Right ventricle myocardium inferior (tissue), 1 donor: ENCODE measurements at regions of chr7 and their contacts with region 1.

Region 1: DNA sequence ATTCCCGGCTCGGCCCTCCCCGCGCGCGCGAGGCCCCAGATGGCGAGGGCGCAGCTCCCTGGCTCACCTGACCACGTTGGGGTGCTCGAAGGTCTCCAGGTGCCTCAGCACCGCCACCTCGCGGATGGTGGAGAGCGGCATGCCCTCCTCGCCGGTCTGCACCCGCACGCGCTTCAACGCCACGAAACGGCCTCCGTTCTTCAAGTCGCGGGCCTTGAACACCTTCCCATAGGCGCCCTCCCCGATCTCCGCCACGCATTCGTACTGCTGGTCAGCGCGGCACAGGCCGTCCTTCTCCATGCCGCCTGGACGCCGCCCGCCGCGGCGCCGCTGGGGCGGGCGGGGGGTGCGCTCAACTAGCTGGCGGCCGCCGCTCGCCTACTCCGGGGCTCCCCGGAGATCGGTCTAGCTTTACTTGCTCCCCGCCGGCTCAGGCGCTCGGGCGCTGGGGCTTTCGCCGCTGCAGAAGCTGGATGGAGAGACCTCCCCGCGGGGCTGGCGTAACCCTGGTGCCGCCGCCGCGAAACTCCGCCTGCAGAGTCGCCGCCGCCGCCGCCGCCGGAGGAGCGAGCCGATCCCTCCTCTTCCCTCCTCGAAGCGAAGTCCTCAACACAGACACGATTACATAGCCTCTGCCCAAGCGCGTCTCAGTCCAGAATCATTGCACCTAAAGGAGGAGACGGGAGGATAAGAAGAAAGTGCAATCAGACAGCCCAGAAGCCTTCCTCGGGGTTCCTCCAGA is 3.2 kb downstream of the CDK6 start:
- DNase-seq: peak; percentile 94
- ATAC-seq: peak; percentile 80

Region 2: DNA sequence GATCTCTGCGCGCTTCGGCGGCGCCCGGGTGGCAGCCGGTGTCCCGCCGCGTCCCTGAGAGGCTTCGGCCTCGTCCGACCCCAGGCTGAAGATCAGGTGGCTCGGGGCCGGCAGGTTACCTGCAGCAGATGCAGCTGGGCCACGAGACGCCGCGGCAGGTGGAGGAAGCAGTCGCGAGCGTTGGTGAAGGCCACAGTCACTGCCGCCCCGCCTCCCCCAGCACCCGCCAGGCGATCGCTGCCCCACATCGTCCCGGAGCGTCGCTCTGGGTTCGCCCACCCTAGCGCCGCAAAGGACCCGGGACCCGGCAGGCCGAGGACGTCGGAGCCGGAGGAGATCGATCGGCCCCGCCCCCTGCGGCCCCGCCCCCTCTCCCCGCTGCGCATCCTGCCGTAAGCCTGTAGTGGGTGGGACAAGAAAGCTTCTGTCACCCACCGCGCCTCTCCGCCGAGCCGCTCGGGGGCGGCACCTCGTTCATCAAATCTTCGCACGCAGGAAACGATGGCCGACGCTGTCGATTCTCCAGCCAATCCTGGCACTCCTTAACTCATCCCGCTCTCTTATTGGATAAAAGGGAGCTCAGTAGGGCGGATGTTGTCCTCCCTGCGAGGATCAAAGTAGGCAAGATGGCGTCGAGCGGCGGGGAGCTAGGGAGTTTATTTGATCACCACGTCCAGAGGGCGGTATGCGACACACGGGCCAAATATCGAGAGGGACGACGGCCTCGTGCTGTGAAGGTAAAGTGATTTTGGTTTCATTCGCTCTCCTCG is 304.8 kb before region 1 on chr7 and contains the starts of genes PEX1 and RBM48:
- intact Hi-C with region 1: loop called (anchors 10 kb)
- DNase-seq: peak; percentile 96
- ATAC-seq: peak; percentile 99
- total RNA-seq, gene PEX1: 10.4 TPM
- total RNA-seq, gene RBM48: 11.8 TPM

Region 3: DNA sequence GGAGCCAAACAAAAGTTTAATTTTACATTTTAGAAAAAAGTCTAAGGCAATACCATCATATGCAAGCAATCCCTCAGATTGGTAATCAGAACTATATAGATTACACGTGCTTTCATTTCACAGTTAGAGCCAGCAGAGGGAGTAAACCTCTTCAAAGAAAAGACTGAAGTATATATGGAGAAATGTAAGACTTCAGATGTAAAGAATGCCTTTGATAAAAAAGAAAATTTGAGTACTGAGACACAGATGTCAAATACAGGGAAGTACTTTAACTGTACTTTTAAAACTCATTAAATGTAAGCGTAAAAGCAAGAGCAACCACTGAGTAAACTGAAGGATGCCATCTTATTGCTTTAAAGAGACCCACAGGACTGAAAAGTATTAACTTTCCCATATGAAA is 141.6 kb before region 1 on chr7:
- intact Hi-C with region 1: loop called (anchors 1 kb)
- DNase-seq: no peak
- ATAC-seq: no peak

Region 4: GRCh38 chr7:92781117-92781720 is 52.0 kb before region 1 on chr7:
- intact Hi-C with region 1: loop called (anchors 5 kb)
- DNase-seq: no peak
- ATAC-seq: peak; percentile 76

Region 5: DNA sequence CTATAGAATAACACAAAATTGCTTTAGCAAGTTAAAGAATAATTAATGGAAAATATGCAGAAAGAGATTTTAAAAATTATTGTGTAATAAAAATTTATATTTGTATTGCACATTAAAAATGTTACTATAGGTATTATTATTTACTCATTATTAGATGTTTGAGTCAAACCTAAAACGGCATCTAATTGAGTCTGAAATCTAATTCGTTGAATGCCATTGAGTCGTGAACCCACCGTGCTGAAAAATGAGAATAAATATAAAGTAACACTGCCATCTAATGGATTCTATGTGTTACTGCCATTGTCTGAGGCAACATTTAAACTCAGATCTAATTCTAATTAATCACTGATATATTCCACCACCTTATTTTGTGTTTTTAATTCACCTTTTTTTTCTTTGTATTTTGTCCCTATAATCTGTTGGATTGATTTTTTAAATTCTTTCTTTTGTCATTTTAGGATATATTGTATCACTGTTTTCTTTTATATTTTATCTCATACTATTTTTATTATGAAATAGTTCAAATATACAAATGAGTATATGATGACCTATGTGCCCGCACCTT is 222.4 kb after region 1 on chr7:
- intact Hi-C with region 1: loop called (anchors 2 kb)
- DNase-seq: no peak
- ATAC-seq: no peak